HEK293 (cell line): ENCODE measurements at regions of chr2 and their contacts with region 1.

Region 1: DNA sequence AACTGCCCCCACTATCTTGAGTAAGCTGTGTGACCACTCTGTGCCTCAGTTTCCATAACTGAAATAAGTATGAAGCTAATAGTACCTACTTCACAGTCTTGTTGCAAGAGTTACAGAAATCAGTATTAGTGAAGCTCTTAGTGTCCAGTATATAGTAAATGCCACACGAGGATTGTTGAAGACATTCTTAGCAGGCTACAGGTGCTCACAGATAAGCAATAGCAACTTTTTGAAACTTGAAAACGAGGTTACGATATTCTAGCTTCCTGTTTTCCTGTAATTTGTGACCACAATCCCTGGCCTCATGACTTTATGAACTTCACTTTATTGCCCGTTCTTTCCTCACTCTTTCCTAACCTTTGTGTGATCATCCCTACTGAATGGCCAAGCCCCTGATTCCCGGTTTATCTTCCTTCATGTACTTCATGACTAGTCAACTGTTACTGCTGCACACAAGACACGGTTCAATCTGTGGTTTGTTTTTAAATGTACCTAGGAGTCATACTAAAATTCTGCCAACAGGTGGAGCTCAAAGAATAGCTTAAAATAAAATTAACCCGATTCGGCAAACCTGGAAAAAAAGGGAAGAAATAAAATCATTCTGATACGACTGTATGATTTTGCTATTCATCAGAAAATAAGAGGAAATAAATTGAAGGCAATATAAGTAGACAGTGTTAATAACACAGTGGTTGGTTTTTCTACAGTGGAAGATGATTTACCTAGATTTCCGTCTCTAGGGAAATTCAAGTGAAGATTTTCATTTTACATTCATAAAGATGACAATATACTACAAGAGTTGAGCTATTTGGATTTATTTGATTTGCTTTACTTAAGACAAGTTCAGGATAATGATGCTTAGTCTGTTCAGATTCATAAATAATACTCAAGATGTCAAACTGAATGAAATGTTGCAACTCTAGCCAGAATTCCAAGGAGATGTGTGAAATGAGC is 38.1 kb upstream of the STAT1 start:
- H3K4me3 ChIP-seq: no peak overlapping the region
- H3K27ac ChIP-seq: no peak overlapping the region
- H3K4me1 ChIP-seq: no peaks in the 10 kb centered on the region; the same call in 1 of the 2 replicates
- CTCF ChIP-seq: peak; percentile 13; the same call in 1 of the 2 replicates

Region 2: DNA sequence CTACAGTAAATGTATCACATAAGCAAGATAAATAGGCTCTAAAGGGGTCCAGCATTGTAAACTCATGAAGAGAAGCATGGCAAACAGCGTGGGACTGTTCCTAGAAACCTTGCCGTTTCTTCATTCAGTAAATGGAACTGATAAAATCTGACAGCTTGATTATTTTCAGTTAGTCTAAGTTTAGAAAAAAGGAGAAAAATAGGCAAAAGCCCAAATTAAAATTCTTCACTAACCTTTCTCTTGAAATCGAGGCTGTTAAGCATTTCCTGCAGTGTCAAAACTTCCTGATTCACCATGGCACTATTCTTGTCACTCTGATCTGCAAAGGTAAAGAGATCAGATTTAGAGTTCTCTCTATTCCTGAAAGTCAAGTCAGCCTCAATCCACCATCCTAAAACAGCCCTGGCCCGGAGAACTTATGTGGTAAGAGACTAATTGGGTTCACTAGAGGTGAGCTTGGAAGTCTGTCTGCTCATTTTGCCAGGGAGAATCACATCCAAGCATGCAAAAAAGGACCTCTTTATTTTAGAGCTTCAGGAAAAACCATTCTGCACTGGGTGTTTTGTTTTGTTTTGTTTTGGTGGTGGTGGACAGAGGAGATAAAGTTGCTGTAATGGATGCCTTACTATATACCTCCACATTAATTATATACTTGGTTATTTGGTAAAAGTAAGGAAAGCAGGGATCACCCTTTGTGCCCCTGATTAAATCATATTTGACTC is 14.3 kb after region 1 on chr2:
- CTCF ChIA-PET with region 1: interaction called, 11 read pairs
- POLR2A ChIA-PET with region 1: no interaction called
- H3K4me3 ChIP-seq: no peak overlapping the region
- H3K27ac ChIP-seq: 0 out of 2 replicates have a peak overlapping the region, but pooled peaks have one; percentile 32
- H3K4me1 ChIP-seq: peaks cover 13% of the 10 kb centered on the region; the same call in 1 of the 2 replicates
- CTCF ChIP-seq: no peak

Region 3: GRCh38 chr2:191158193-191158592 is 106.1 kb after region 1 on chr2:
- CTCF ChIA-PET with region 1: interaction called, 146 read pairs
- POLR2A ChIA-PET with region 1: no interaction called
- H3K4me3 ChIP-seq: no peak overlapping the region
- H3K27ac ChIP-seq: no peak overlapping the region
- H3K4me1 ChIP-seq: peaks cover 2% of the 10 kb centered on the region; the same call in 1 of the 2 replicates
- CTCF ChIP-seq: no peak

Region 4: DNA sequence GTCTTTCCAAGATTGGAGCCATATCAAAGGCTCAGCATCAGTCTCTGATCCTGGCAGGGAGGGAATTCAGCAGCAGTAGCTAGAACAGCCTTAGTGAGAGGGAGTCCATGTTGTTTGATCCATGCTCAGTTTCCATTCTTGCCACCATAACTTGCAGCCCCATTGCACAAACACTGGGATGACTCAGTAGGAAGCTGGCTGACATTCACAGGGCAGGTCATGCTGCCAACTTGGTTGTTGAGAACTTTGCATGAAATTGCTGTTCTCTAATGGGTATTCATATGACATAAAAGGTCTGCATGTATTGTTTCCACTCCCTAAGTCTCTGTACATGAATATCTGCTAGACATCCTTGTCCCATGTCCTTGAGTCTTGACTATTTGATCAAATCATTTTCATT is 128.6 kb after region 1 on chr2:
- CTCF ChIA-PET with region 1: no interaction called
- POLR2A ChIA-PET with region 1: no interaction called
- H3K4me3 ChIP-seq: no peak overlapping the region
- H3K27ac ChIP-seq: no peak overlapping the region
- H3K4me1 ChIP-seq: no peaks in the 10 kb centered on the region
- CTCF ChIP-seq: no peak

Region 5: GRCh38 chr2:191218292-191218898 is 166.3 kb after region 1 on chr2:
- CTCF ChIA-PET with region 1: interaction called, 38 read pairs
- POLR2A ChIA-PET with region 1: no interaction called
- H3K4me3 ChIP-seq: no peak overlapping the region
- H3K27ac ChIP-seq: no peak overlapping the region
- H3K4me1 ChIP-seq: no peaks in the 10 kb centered on the region
- CTCF ChIP-seq: peak; percentile 73

Region 6: GRCh38 chr2:191521608-191522208 is 469.6 kb after region 1 on chr2:
- CTCF ChIA-PET with region 1: interaction called, 34 read pairs
- POLR2A ChIA-PET with region 1: no interaction called
- H3K4me3 ChIP-seq: no peak overlapping the region
- H3K27ac ChIP-seq: no peak overlapping the region
- H3K4me1 ChIP-seq: no peaks in the 10 kb centered on the region
- CTCF ChIP-seq: peak; percentile 60; the same call in 1 of the 2 replicates